Mucosa of descending colon (tissue), 3 donors: ENCODE measurements at regions of chr6 and their contacts with region 1.

Region 1: GRCh38 chr6:36360241-36361054 is 23.8 kb upstream of the BNIP5 start:
- DNase-seq: peak; percentile 74 to 87 (median 75)
- ATAC-seq: peak; percentile 96
- H3K4me3 ChIP-seq: no peak overlapping the region
- H3K4me1 ChIP-seq: no peaks in the 10 kb centered on the region
- CTCF ChIP-seq: peak; percentile 74

Region 2: GRCh38 chr6:36224904-36225461 is 135.5 kb before region 1 on chr6:
- intact Hi-C with region 1: no loop called
- DNase-seq: no peak
- ATAC-seq: no peak
- H3K4me3 ChIP-seq: no peak overlapping the region
- H3K4me1 ChIP-seq: peaks cover 35% of the 10 kb centered on the region
- CTCF ChIP-seq: no peak

Region 3: DNA sequence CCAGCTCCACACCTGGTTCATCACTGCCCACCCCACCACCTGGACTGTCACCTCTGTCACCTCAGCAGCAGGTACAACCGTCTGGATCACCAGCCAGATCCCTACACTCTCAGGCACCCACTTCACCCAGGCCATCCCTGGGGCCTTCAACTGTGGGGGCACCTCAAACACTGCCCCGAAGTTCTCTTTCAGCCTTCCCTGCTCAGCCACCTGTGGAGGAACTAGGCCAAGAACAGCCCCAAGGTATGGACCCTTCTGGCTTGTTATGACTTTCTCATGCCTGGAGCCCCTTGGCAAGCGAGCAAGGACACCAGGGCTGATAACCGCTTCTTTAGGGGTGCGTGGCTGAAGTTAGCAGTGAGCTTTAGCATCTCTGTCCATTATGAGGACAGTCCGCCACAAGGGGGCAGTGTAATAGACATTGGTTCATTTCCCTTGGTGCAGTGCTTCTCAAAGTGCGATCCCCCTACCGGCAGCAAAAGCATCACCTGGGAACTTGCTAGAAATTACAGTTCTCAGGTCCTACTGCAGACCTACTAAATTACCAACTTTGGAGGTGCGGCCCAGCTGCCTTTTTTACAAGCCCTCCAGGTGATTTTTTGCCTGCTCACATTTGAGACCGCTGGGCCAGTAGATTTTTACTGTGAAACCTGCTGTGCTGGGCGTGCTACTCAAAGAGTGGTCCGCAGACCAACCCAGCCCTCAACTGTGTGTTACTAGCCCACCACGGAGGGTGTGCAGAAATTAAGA is 58.0 kb before region 1 on chr6:
- intact Hi-C with region 1: loop called (anchors 5 to 10 kb)
- DNase-seq: peak in 2 of 3 donors; percentile 78 to 100
- ATAC-seq: peak; percentile 100
- H3K4me3 ChIP-seq: no peak overlapping the region
- H3K4me1 ChIP-seq: peaks cover 3% of the 10 kb centered on the region
- CTCF ChIP-seq: peak; percentile 84